RWPE1 (cell line): ENCODE measurements at regions of chr7 and their contacts with region 1.

Region 1: DNA sequence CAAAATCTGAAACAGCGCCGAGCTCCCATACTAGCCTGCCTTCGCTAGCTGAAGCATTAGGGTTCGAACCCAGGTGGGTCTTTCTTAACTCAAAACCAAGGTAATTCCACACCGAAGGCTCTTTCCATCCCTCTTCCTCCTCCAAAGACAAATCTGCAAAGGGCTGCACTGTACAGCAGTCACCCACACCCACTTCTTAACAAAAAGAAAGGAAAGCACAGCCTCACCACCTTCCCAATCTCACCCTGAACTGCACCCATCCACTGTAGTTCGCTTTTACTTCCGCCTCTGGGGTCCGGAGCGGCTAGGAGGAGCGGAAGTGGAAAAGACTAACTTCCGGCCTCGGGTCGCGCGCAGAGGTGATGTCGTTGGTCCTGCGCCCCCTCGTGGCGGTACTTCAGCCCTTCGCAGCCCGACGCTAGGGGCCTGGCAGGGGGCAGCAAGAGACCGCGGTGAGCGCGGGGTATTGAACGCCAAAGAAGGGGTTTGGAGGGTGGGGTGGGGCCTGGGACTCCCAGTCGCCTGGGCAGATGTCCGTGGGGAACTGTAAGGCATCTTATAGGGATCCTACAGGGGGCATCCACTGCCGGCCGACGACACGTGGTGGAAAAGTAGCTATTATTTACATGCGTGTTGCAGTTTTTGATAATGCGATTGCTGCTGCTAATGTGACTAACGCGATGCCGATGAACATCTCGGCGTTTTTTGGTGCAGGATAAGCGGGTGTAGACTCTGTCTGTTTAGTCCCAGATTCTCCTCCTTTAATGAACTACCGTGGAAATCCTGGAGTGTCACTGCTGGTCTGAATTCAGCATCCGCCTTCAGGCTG is at the start of gene MTERF1:
- DNase-seq: peak; percentile 82
- H3K27ac ChIP-seq: peak within 1 kb of the TSS; percentile 62
- CTCF ChIP-seq: peak; percentile 99

Region 2: DNA sequence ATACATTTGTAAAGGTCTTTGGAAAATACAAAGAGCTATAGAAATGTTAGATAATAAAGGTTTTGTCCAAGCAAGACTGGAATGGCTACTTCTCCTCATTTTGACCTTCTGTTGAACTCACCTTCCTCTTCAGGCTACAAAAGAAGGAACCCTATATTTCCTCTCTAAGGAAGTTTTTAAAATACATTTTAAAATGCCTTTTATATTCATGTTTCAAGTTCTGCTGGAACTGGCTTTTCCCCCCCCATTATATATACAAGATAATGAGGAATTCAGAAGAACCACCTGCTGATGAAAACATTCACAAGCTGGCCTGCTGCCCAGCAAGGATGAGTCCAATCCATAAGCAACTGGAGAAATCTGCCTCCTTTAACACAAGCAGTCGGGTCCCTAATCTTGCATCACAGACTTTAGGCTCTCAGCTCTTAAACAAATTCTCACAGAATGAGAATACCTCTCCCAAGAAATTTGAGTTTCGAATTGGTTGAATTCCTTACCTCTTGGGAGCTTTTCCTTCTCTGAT is 44.7 kb before region 1 on chr7:
- CTCF ChIA-PET with region 1: interaction called, 24 read pairs
- POLR2A ChIA-PET with region 1: no interaction called
- DNase-seq: no peak
- H3K27ac ChIP-seq: no peak overlapping the region
- CTCF ChIP-seq: no peak

Region 3: DNA sequence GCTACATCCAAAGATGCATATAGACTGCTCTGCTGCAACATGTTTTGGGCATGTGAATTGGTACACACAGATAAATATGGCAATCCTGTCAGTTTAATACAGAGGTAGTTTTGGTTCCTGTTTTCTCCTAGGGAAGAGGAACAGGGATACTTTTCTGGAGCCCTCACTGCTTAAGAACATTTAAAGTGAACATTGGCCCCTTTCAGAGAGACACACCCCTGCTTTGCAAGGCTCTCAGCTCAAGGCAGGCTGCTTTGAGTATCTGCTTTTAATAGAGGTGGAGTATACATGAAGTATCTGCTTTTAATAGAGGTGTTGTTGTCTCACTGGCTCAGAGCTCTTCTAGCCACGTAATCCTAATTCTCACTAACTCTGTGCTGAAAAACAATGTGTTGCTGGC is 214.8 kb after region 1 on chr7:
- CTCF ChIA-PET with region 1: interaction called, 11 read pairs
- POLR2A ChIA-PET with region 1: no interaction called
- DNase-seq: no peak
- H3K27ac ChIP-seq: no peak overlapping the region
- CTCF ChIP-seq: no peak